Naive thymus-derived CD4-positive, alpha-beta T cell (primary cell): ENCODE measurements at regions of chr10 and their contacts with region 1.

Region 1: GRCh38 chr10:115171392-115171960 is 78.3 kb downstream of the ATRNL1 start:
- DNase-seq: no peak
- ATAC-seq: no peak
- H3K4me3 ChIP-seq: no peak overlapping the region
- H3K4me3 Mint-ChIP-seq: no peak overlapping the region
- H3K27ac ChIP-seq: no peak overlapping the region
- H3K27ac Mint-ChIP-seq: no peak overlapping the region
- H3K4me1 ChIP-seq: no peaks in the 10 kb centered on the region
- H3K4me1 Mint-ChIP-seq: peaks cover 0 to 2% (median 0%) of the 10 kb centered on the region in 7 donors
- H3K27me3 ChIP-seq: no peaks in the 10 kb centered on the region
- H3K27me3 Mint-ChIP-seq: peaks cover 0 to 7% (median 0%) of the 10 kb centered on the region in 5 donors

Region 2: GRCh38 chr10:115417585-115418265 is 246.2 kb after region 1 on chr10:
- CTCF ChIA-PET with region 1: no interaction called
- POLR2A ChIA-PET with region 1: no interaction called
- intact Hi-C with region 1: loop called in 1 of 2 experiments (anchors 2 kb)
- DNase-seq: no peak
- ATAC-seq: no peak
- H3K4me3 ChIP-seq: no peak overlapping the region
- H3K4me3 Mint-ChIP-seq: no peak overlapping the region
- H3K27ac ChIP-seq: no peak overlapping the region
- H3K27ac Mint-ChIP-seq: no peak overlapping the region
- H3K4me1 ChIP-seq: no peaks in the 10 kb centered on the region
- H3K4me1 Mint-ChIP-seq: peaks cover 0 to 1% (median 0%) of the 10 kb centered on the region in 7 donors
- H3K27me3 ChIP-seq: no peaks in the 10 kb centered on the region
- H3K27me3 Mint-ChIP-seq: no peaks in the 10 kb centered on the region

Region 3: DNA sequence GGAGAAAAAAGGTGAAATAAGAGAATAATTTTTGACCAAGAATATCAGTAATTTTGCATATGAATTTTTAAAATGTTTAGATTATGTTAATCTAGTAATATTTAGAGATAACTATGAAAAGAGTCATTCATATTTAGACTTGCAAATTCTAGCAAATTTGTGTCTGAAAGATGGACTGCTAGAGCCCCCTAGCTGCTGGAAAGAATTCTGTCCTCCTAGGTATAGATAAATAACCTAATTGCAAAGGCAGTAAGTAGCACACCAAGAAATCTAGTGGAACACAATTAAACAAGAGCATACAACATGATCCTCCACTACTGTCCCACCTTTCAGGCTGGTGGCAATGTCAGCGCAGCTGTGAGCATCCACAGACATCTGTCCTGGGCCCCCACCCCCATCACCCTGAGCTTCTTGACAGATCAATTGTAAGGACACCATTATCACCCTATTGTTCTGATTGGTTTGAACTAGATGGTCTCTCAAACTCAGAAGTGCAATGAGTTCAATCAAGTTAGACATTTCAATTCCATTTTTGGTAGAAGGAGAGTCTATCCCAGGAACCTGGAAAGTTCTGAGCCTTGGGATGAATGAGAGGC is 1116.5 kb after region 1 on chr10:
- CTCF ChIA-PET with region 1: no interaction called
- POLR2A ChIA-PET with region 1: no interaction called
- intact Hi-C with region 1: loop called in 1 of 2 experiments (anchors 5 kb)
- DNase-seq: no peak
- ATAC-seq: no peak
- H3K4me3 ChIP-seq: no peak overlapping the region
- H3K4me3 Mint-ChIP-seq: no peak overlapping the region
- H3K27ac ChIP-seq: no peak overlapping the region
- H3K27ac Mint-ChIP-seq: no peak overlapping the region
- H3K4me1 ChIP-seq: no peaks in the 10 kb centered on the region
- H3K4me1 Mint-ChIP-seq: peaks cover 0 to 2% (median 0%) of the 10 kb centered on the region in 7 donors
- H3K27me3 ChIP-seq: no peaks in the 10 kb centered on the region
- H3K27me3 Mint-ChIP-seq: peaks cover 0 to 16% (median 6%) of the 10 kb centered on the region in 5 donors

Region 4: GRCh38 chr10:116385994-116386809 is 1214.7 kb after region 1 on chr10:
- CTCF ChIA-PET with region 1: no interaction called
- POLR2A ChIA-PET with region 1: no interaction called
- intact Hi-C with region 1: loop called in 1 of 2 experiments (anchors 1 kb)
- DNase-seq: peak in 3 of 9 donors; percentile 1 to 13 (median 5)
- ATAC-seq: no peak
- H3K4me3 ChIP-seq: no peak overlapping the region
- H3K4me3 Mint-ChIP-seq: no peak overlapping the region
- H3K27ac ChIP-seq: no peak overlapping the region
- H3K27ac Mint-ChIP-seq: no peak overlapping the region
- H3K4me1 ChIP-seq: no peaks in the 10 kb centered on the region
- H3K4me1 Mint-ChIP-seq: no peaks in the 10 kb centered on the region
- H3K27me3 ChIP-seq: peaks cover 0 to 2% of the 10 kb centered on the region in 2 donors
- H3K27me3 Mint-ChIP-seq: peaks cover 0 to 9% (median 4%) of the 10 kb centered on the region in 5 donors